T-cell (primary cell): ENCODE measurements at regions of chr11 and their contacts with region 1.

Region 1: DNA sequence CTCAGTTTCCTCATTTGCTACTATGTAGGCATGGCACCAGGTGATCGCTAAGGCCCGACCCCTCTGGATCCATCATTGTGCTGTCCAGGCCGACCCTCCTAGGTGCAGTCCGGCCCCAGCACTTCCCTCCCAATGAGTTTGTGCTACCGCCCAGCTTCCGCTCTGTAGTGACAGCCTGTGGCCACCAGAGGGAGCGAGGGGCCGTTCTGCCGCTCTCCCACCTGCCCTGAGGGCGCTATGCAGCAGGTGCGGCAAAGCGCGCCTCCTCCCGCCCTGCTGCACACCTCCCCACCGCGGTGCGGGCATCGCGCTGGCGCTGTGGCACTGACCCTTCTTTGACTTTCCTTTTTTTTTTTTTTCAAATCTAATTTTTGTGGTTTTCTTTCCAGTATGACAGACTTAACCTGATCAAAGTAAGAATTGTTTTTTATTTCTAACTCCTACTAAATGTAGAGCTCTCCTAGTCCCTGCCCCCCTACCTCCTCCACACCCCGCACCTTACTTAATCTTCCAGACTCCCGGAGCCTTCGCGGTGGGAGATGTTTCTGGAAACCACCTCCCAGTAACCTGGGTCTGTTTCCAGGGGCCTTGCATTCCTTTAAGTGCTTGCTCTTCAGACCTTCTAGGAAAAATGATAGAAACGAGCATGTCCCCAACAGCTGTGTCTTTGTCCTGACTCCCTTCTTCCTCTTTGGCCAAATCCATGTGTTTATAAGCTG is 73.7 kb downstream of the SCN3B start:
- DNase-seq: peak; percentile 29 to 80 (median 55)
- ATAC-seq: peak; percentile 83 to 92 (median 86)
- H3K4me3 ChIP-seq: no peak overlapping the region
- H3K4me3 Mint-ChIP-seq: no peak overlapping the region
- H3K27ac ChIP-seq: no peak overlapping the region
- H3K27ac Mint-ChIP-seq: no peak overlapping the region
- H3K4me1 ChIP-seq: peaks cover 0 to 17% of the 10 kb centered on the region in 2 experiments
- H3K4me1 Mint-ChIP-seq: peaks cover 18 to 25% (median 19%) of the 10 kb centered on the region in 3 donors
- H3K27me3 ChIP-seq: peaks cover 0 to 3% of the 10 kb centered on the region in 2 experiments
- H3K27me3 Mint-ChIP-seq: no peaks in the 10 kb centered on the region

Region 2: GRCh38 chr11:123286761-123287160 is 294.0 kb before region 1 on chr11:
- CTCF ChIA-PET with region 1: interaction called in 1 of 2 experiments, 10 read pairs
- POLR2A ChIA-PET with region 1: no interaction called
- DNase-seq: no peak
- ATAC-seq: no peak
- H3K4me3 ChIP-seq: no peak overlapping the region
- H3K4me3 Mint-ChIP-seq: no peak overlapping the region
- H3K27ac ChIP-seq: no peak overlapping the region
- H3K27ac Mint-ChIP-seq: no peak overlapping the region
- H3K4me1 ChIP-seq: peaks cover 0 to 2% of the 10 kb centered on the region in 2 experiments
- H3K4me1 Mint-ChIP-seq: no peaks in the 10 kb centered on the region
- H3K27me3 ChIP-seq: peaks cover 0 to under 1% of the 10 kb centered on the region in 2 experiments
- H3K27me3 Mint-ChIP-seq: peaks cover 15 to 16% of the 10 kb centered on the region in 2 donors

Region 3: GRCh38 chr11:123659311-123659710 is 78.6 kb after region 1 on chr11:
- CTCF ChIA-PET with region 1: no interaction called
- POLR2A ChIA-PET with region 1: no interaction called
- DNase-seq: no peak
- ATAC-seq: no peak
- H3K4me3 ChIP-seq: no peak overlapping the region
- H3K4me3 Mint-ChIP-seq: peak overlapping the region in 1 of 3 donors; percentile 35
- H3K27ac ChIP-seq: no peak overlapping the region
- H3K27ac Mint-ChIP-seq: no peak overlapping the region
- H3K4me1 ChIP-seq: peaks cover 5 to 6% of the 10 kb centered on the region in 2 experiments
- H3K4me1 Mint-ChIP-seq: peaks cover 23 to 26% (median 24%) of the 10 kb centered on the region in 3 donors
- H3K27me3 ChIP-seq: peaks cover 11 to 12% of the 10 kb centered on the region in 2 experiments
- H3K27me3 Mint-ChIP-seq: peaks cover 19 to 23% of the 10 kb centered on the region in 2 donors

Region 4: GRCh38 chr11:123719452-123719851 is 138.7 kb after region 1 on chr11:
- CTCF ChIA-PET with region 1: interaction called in 1 of 2 experiments, 11 read pairs
- POLR2A ChIA-PET with region 1: no interaction called
- DNase-seq: no peak
- ATAC-seq: no peak
- H3K4me3 ChIP-seq: no peak overlapping the region
- H3K4me3 Mint-ChIP-seq: no peak overlapping the region
- H3K27ac ChIP-seq: no peak overlapping the region
- H3K27ac Mint-ChIP-seq: no peak overlapping the region
- H3K4me1 ChIP-seq: no peaks in the 10 kb centered on the region
- H3K4me1 Mint-ChIP-seq: no peaks in the 10 kb centered on the region
- H3K27me3 ChIP-seq: no peaks in the 10 kb centered on the region
- H3K27me3 Mint-ChIP-seq: peaks cover 11 to 27% of the 10 kb centered on the region in 2 donors